Transverse colon (tissue), 4 donors: ENCODE measurements at regions of chr7 and their contacts with region 1.

Region 1: GRCh38 chr7:64951250-64951848 is 39.5 kb downstream of the ZNF117 start:
- DNase-seq: no peak
- H3K4me3 ChIP-seq: no peak overlapping the region
- H3K27ac ChIP-seq: no peak overlapping the region
- H3K4me1 ChIP-seq: peaks cover 8 to 10% (median 9%) of the 10 kb centered on the region in 4 donors
- H3K27me3 ChIP-seq: peaks cover 25% of the 10 kb centered on the region
- CTCF ChIP-seq: peak; percentile 73 to 83 (median 80)
- EP300 ChIP-seq: no peak
- POLR2A ChIP-seq: no peak

Region 2: GRCh38 chr7:65216459-65216858 is 265.1 kb after region 1 on chr7:
- in situ Hi-C with region 1: loop called in 2 of 4 experiments (anchors 10 to 25 kb)
- intact Hi-C with region 1: no loop called
- DNase-seq: peak; percentile 61
- H3K4me3 ChIP-seq: no peak overlapping the region
- H3K27ac ChIP-seq: no peak overlapping the region
- H3K4me1 ChIP-seq: no peaks in the 10 kb centered on the region
- H3K27me3 ChIP-seq: no peaks in the 10 kb centered on the region
- CTCF ChIP-seq: peak; percentile 42 to 67 (median 54)
- EP300 ChIP-seq: no peak
- POLR2A ChIP-seq: no peak

Region 3: GRCh38 chr7:65225422-65226006 is 274.2 kb after region 1 on chr7:
- in situ Hi-C with region 1: loop called in 2 of 4 experiments (anchors 10 to 25 kb)
- intact Hi-C with region 1: no loop called
- DNase-seq: no peak
- H3K4me3 ChIP-seq: no peak overlapping the region
- H3K27ac ChIP-seq: no peak overlapping the region
- H3K4me1 ChIP-seq: no peaks in the 10 kb centered on the region
- H3K27me3 ChIP-seq: no peaks in the 10 kb centered on the region
- CTCF ChIP-seq: no peak
- EP300 ChIP-seq: no peak
- POLR2A ChIP-seq: no peak

Region 4: GRCh38 chr7:65307651-65308299 is 356.4 kb after region 1 on chr7:
- in situ Hi-C with region 1: loop called in 2 of 4 experiments (anchors 25 kb)
- intact Hi-C with region 1: no loop called
- DNase-seq: peak; percentile 8
- H3K4me3 ChIP-seq: no peak overlapping the region
- H3K27ac ChIP-seq: no peak overlapping the region
- H3K4me1 ChIP-seq: no peaks in the 10 kb centered on the region
- H3K27me3 ChIP-seq: no peaks in the 10 kb centered on the region
- CTCF ChIP-seq: peak; percentile 49 to 77 (median 65)
- EP300 ChIP-seq: no peak
- POLR2A ChIP-seq: no peak